ENCODE measurements at regions of chr19 and their contacts with region 1.

Region 1: DNA sequence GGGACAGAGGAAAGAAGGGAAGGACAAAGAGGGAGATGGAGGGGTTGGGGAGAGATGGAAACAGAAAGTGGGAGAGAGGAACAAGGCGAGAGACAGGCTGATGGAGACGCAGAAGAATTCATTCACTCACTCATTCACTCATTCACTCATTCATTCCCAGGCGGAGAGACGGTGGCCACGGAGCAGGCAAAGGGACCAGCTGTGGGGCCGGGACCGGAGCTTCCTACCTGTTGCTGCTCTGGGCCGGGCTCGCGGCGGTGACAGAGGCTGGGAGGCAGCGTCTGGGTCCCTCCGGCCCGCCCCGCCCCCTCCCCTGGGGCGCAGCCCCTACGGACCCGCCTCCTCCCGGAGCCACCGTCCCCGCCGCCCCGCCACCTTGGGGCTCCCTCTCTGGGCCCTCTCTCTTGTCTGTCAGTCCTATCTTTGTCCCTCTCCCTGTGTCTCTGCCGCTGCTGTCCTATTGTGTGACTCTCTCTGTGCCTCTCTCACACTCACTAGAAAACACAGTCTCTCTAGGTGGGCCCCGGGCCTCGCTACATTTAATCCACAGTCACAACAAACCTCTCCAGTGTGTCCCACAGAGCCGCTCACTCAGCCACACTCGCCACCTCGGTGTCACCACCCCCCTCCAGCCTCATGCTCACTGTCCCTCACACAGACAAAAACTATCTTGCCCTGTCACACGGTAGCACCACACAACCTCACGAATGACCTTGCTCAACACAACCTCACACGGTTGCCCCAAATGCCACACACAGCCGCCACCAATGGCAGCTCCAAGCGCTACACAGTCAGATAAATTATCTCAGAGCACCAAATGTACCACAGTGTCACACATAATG is at the start of gene GNG8:
- DNase-seq: peak in 1 of 10 donors; percentile 45
- H3K4me3 ChIP-seq: peak within 1 kb of the TSS in 30 of 59 donors; percentile 3 to 74 (median 61)
- H3K27ac ChIP-seq: peak within 1 kb of the TSS in 55 of 59 donors; percentile 16 to 98 (median 90)
- H3K27me3 ChIP-seq: no peaks in the 10 kb centered on the region
- CTCF ChIP-seq: no peak
- total RNA-seq, gene GNG8: 3.1 to 9.9 (median 5.0) TPM in 43 of 120 experiments, not detected in the others

Region 2: GRCh38 chr19:46308510-46308909 is 327.6 kb before region 1 on chr19:
- intact Hi-C with region 1: no loop called
- DNase-seq: no peak
- H3K4me3 ChIP-seq: no peak overlapping the region
- H3K27ac ChIP-seq: peak overlapping the region in 1 of 59 donors; percentile 36
- H3K27me3 ChIP-seq: no peaks in the 10 kb centered on the region
- CTCF ChIP-seq: no peak

Region 3: DNA sequence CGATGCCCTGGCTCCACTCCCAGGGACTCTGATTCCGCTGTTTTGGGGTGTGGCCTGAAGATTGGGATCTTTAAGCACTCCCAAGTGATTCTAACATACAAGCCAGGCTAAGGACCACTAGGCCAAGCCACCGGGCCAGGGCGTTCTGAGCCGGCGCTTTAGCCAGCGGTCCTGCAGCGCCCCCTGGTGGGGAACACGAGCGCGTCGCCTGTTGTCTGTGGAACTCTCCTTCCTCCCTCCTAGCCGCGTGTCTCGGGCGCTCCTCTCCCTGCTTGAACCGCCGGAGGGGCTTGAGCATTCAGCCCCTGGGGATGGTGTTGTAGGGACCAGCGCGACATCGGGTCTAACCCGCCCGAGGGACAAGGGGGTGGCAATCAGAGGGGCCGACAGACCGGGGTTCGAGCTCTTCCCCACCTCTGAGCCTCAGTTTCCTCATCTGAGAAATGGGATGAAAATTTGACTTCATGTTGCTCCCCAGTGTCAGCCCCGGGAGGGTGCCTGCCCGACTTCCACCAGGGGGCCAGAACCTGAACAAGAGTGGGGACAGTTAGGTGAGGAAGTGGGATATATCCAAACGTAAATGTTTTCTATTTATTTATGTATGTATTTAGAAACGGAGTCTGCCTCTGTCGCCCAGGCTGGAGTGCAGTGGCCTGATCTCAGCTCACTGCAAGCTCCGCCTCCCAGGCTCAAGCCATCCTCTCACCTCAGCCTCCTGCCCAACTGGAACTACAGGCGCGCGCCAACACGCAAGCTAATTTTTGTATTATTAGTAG is 122.5 kb before region 1 on chr19:
- intact Hi-C with region 1: no loop called
- DNase-seq: peak; percentile 60 to 90 (median 77)
- H3K4me3 ChIP-seq: peak overlapping the region in 1 of 59 donors; percentile 11
- H3K27ac ChIP-seq: peak overlapping the region in 1 of 59 donors; percentile 28
- H3K27me3 ChIP-seq: no peaks in the 10 kb centered on the region
- CTCF ChIP-seq: peak; percentile 45 to 100 (median 98)

Region 4: DNA sequence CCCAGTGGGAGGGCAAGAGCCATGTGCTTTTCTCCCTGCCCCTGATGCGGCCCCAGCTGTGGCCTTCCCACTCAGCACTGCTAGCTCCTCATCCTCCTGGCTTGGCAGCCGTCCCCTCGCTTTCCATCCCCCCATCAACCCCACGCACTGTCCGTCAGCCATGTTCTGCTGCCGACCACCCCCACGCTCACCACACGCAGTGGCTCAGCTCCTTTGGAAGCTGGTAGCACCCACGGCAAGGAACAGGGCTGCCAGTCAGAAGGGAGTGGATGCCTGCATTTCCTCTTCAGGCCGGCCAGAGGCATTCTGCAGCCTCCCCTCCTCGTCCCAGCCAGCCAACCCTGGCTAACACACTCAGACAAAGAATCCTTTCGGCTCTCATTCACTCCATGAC is 28.7 kb before region 1 on chr19:
- intact Hi-C with region 1: loop called in 1 of 2 experiments (anchors 2 kb)
- DNase-seq: peak in 8 of 10 donors; percentile 52 to 79 (median 64)
- H3K4me3 ChIP-seq: peak overlapping the region in 26 of 59 donors; percentile 5 to 100 (median 25)
- H3K27ac ChIP-seq: peak overlapping the region; percentile 3 to 100 (median 99)
- H3K27me3 ChIP-seq: no peaks in the 10 kb centered on the region
- CTCF ChIP-seq: peak in 4 of 56 donors; percentile 8 to 23 (median 11)

Measured in dorsolateral prefrontal cortex (tissue), 120 donors.